Prostate gland (tissue), 2 donors: ENCODE measurements at regions of chr5 and their contacts with region 1.

Region 1: GRCh38 chr5:53882676-53883031 is 322.2 kb downstream of the NDUFS4 start:
- DNase-seq: no peak
- H3K4me3 ChIP-seq: no peak overlapping the region
- H3K27ac ChIP-seq: no peak overlapping the region
- H3K4me1 ChIP-seq: no peaks in the 10 kb centered on the region
- H3K27me3 ChIP-seq: no peaks in the 10 kb centered on the region
- CTCF ChIP-seq: no peak
- POLR2A ChIP-seq: no peak

Region 2: GRCh38 chr5:54212331-54212730 is 329.7 kb after region 1 on chr5:
- intact Hi-C with region 1: loop called (anchors 5 kb)
- DNase-seq: no peak
- H3K4me3 ChIP-seq: no peak overlapping the region
- H3K27ac ChIP-seq: no peak overlapping the region
- H3K4me1 ChIP-seq: no peaks in the 10 kb centered on the region
- H3K27me3 ChIP-seq: no peaks in the 10 kb centered on the region
- CTCF ChIP-seq: no peak
- POLR2A ChIP-seq: no peak